ENCODE measurements at regions of chr2 and their contacts with region 1.

Region 1: GRCh38 chr2:70301344-70302194 is at the start of gene FAM136A:
- DNase-seq: peak; percentile 98
- H3K4me3 ChIP-seq: peak within 1 kb of the TSS; percentile 61 to 98 (median 90)
- H3K27ac ChIP-seq: peak within 1 kb of the TSS; percentile 82 to 92 (median 90)
- H3K4me1 ChIP-seq: peaks cover 0 to 36% (median 22%) of the 10 kb centered on the region in 6 donors
- H3K27me3 ChIP-seq: no peaks in the 10 kb centered on the region
- CTCF ChIP-seq: peak; percentile 91 to 99 (median 97)
- POLR2A ChIP-seq: peak in 1 of 3 donors; percentile 3
- total RNA-seq, gene FAM136A: 21.0 to 34.0 (median 24.0) TPM

Region 2: GRCh38 chr2:69724540-69725159 is 576.9 kb before region 1 on chr2:
- intact Hi-C with region 1: loop called (anchors 10 kb)
- DNase-seq: peak; percentile 92
- H3K4me3 ChIP-seq: peak overlapping the region in 5 of 8 donors; percentile 14 to 59 (median 24)
- H3K27ac ChIP-seq: no peak overlapping the region
- H3K4me1 ChIP-seq: peaks cover 0 to 12% (median 6%) of the 10 kb centered on the region in 6 donors
- H3K27me3 ChIP-seq: no peaks in the 10 kb centered on the region
- CTCF ChIP-seq: peak; percentile 90 to 97 (median 96)
- POLR2A ChIP-seq: no peak

Region 3: DNA sequence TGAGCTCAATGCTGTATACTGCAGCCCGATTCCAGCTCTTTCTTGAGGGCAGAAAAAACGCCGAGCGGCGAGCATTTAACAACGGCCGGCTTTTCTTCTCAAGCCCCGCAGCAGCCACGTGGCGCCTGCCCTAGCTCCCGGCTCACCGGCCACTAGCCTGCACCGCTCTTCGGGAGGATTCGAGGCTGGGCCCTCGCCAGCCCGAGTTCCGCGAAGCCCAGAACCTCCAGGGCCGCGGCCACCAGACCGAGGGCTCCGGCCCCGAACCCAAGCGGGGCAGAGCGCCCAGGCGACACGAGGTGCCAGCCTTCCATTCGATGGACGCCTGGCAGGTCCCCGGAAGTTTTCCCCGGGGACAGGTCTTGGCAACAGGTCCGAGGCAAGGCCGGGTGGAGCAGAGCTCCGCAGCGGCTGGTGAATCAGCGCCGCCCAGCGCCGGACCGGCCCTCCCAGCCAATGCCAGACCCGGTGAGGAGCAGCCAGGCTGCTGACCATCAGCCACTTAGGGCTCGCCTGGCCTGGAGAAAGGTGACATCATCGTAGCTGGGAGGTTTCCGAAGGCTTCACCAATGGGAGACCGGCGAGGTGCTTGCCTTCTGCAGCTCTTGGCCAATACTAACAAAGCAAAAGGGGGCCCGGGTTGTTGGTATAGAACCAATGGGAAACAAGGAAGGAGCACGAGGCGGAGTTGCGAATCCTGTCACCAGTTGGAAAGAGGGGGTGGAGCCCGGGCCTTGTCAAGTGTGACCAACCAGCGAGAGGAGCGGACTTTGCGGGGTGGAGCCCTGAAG is 387.2 kb before region 1 on chr2:
- intact Hi-C with region 1: loop called (anchors 5 kb)
- DNase-seq: peak; percentile 98
- H3K4me3 ChIP-seq: peak overlapping the region; percentile 40 to 85 (median 76)
- H3K27ac ChIP-seq: peak overlapping the region; percentile 80 to 100 (median 99)
- H3K4me1 ChIP-seq: peaks cover 13 to 66% (median 53%) of the 10 kb centered on the region in 6 donors
- H3K27me3 ChIP-seq: no peaks in the 10 kb centered on the region
- CTCF ChIP-seq: peak in 4 of 11 experiments; percentile 9 to 33 (median 26)
- POLR2A ChIP-seq: peak; percentile 75 to 97 (median 85)

Region 4: GRCh38 chr2:71618327-71619113 is 1317.0 kb after region 1 on chr2:
- intact Hi-C with region 1: no loop called
- DNase-seq: no peak
- H3K4me3 ChIP-seq: no peak overlapping the region
- H3K27ac ChIP-seq: peak overlapping the region in 1 of 8 donors; percentile 18
- H3K4me1 ChIP-seq: peaks cover 11 to 47% (median 30%) of the 10 kb centered on the region in 6 donors
- H3K27me3 ChIP-seq: no peaks in the 10 kb centered on the region
- CTCF ChIP-seq: no peak
- POLR2A ChIP-seq: no peak

Measured in spleen (tissue), 13 donors.